Activated B cell treated with CpG ODN at 0.5 μM for 24 hours (primary cell): ENCODE measurements at regions of chr16 and their contacts with region 1.

Region 1: GRCh38 chr16:234468-235305 is at the start of gene FAM234A:
- DNase-seq: peak; percentile 98
- ATAC-seq: peak; percentile 85
- H3K4me3 Mint-ChIP-seq: peak within 1 kb of the TSS; percentile 98
- H3K27ac Mint-ChIP-seq: peak within 1 kb of the TSS; percentile 99
- H3K4me1 Mint-ChIP-seq: peaks cover 18% of the 10 kb centered on the region
- H3K27me3 Mint-ChIP-seq: no peaks in the 10 kb centered on the region
- CTCF ChIP-seq: no peak
- total RNA-seq, gene FAM234A: 45.9 and 49.6 TPM in 2 replicates

Region 2: GRCh38 chr16:138049-138417 is 96.7 kb before region 1 on chr16:
- CTCF ChIA-PET with region 1: no interaction called
- POLR2A ChIA-PET with region 1: interaction called, 3 read pairs
- intact Hi-C with region 1: loop called (anchors 2 kb)
- DNase-seq: peak; percentile 39
- ATAC-seq: peak; percentile 23
- H3K4me3 Mint-ChIP-seq: peak overlapping the region; percentile 78
- H3K27ac Mint-ChIP-seq: peak overlapping the region; percentile 50
- H3K4me1 Mint-ChIP-seq: peaks cover 11% of the 10 kb centered on the region
- H3K27me3 Mint-ChIP-seq: no peaks in the 10 kb centered on the region
- CTCF ChIP-seq: no peak

Region 3: GRCh38 chr16:212999-213398 is 21.7 kb before region 1 on chr16:
- CTCF ChIA-PET with region 1: no interaction called
- POLR2A ChIA-PET with region 1: interaction called, 10 read pairs
- intact Hi-C with region 1: no loop called
- DNase-seq: no peak
- ATAC-seq: no peak
- H3K4me3 Mint-ChIP-seq: no peak overlapping the region
- H3K27ac Mint-ChIP-seq: no peak overlapping the region
- H3K4me1 Mint-ChIP-seq: no peaks in the 10 kb centered on the region
- H3K27me3 Mint-ChIP-seq: no peaks in the 10 kb centered on the region
- CTCF ChIP-seq: no peak

Region 4: DNA sequence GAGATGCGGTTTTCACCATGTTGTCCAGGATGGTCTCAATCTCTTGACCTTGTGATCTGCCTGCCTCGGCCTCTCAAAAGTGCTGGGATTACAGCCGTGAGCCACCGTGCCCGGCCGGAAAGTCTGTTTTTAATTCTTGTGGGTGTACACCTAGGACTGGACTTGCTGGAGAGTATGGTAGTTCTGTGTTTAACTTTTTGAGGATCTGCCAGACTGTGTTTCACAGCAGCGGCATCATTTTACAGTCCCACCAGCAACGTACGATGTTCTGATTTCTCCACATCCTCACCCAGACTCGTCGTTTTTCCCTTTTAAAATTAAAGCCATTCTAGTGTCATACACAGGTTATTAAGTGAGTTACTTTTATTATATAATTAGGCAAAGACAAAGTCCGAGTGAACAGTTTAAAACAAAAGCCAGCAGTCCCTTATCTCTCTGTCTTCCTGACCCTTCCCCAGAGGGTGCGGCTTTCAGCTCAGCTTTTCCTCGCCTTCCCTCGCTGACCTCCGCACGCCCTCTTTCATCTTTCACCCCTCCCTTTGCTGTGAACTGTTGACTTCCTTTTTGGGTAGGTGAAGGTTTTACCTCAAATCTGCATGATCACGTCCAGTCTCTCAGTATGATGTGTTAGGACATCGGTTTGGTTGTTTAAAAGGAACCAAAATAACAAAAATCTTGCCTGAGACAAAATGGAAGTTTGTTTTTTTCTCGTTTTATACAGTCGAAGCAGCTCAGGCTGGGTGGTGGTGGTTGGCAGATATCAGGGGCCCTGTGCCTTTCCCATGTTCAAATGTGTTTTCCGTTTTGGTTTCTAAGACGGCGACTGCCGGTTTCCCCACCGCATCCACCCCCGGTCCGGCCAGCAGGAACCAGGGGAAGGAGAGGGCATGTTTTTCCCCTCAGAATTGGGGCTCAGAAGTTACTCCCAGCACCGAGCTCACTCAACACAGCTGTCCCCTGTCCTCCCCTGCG is 18.0 kb after region 1 on chr16:
- CTCF ChIA-PET with region 1: no interaction called
- POLR2A ChIA-PET with region 1: interaction called, 15 read pairs
- intact Hi-C with region 1: no loop called
- DNase-seq: no peak
- ATAC-seq: peak; percentile 47
- H3K4me3 Mint-ChIP-seq: peak overlapping the region; percentile 73
- H3K27ac Mint-ChIP-seq: peak overlapping the region; percentile 73
- H3K4me1 Mint-ChIP-seq: peaks cover 9% of the 10 kb centered on the region
- H3K27me3 Mint-ChIP-seq: no peaks in the 10 kb centered on the region
- CTCF ChIP-seq: no peak

Region 5: GRCh38 chr16:370443-370842 is 135.8 kb after region 1 on chr16 and contains the start of gene MRPL28:
- CTCF ChIA-PET with region 1: no interaction called
- POLR2A ChIA-PET with region 1: interaction called, 18 read pairs
- intact Hi-C with region 1: no loop called
- DNase-seq: peak; percentile 88
- ATAC-seq: peak; percentile 99
- H3K4me3 Mint-ChIP-seq: peak within 1 kb of the TSS; percentile 93
- H3K27ac Mint-ChIP-seq: peak within 1 kb of the TSS; percentile 91
- H3K4me1 Mint-ChIP-seq: peaks cover 13% of the 10 kb centered on the region
- H3K27me3 Mint-ChIP-seq: no peaks in the 10 kb centered on the region
- CTCF ChIP-seq: no peak
- total RNA-seq, gene MRPL28: 82.4 and 87.3 TPM in 2 replicates